ENCODE measurements at regions of chr19 and their contacts with region 1.

Region 1: GRCh38 chr19:3479177-3479833 is 1.0 kb downstream of the SMIM24 start:
- DNase-seq: peak; percentile 85
- ATAC-seq: peak; percentile 71
- H3K4me3 Mint-ChIP-seq: peak overlapping the region; percentile 48
- H3K27ac Mint-ChIP-seq: no peak overlapping the region
- H3K4me1 Mint-ChIP-seq: peaks cover 9% of the 10 kb centered on the region
- H3K27me3 Mint-ChIP-seq: no peaks in the 10 kb centered on the region

Region 2: GRCh38 chr19:3304871-3305423 is 174.4 kb before region 1 on chr19:
- CTCF ChIA-PET with region 1: interaction called, 17 read pairs
- DNase-seq: peak; percentile 80
- ATAC-seq: peak; percentile 66
- H3K4me3 Mint-ChIP-seq: no peak overlapping the region
- H3K27ac Mint-ChIP-seq: no peak overlapping the region
- H3K4me1 Mint-ChIP-seq: no peaks in the 10 kb centered on the region
- H3K27me3 Mint-ChIP-seq: peaks cover 8% of the 10 kb centered on the region

Region 3: DNA sequence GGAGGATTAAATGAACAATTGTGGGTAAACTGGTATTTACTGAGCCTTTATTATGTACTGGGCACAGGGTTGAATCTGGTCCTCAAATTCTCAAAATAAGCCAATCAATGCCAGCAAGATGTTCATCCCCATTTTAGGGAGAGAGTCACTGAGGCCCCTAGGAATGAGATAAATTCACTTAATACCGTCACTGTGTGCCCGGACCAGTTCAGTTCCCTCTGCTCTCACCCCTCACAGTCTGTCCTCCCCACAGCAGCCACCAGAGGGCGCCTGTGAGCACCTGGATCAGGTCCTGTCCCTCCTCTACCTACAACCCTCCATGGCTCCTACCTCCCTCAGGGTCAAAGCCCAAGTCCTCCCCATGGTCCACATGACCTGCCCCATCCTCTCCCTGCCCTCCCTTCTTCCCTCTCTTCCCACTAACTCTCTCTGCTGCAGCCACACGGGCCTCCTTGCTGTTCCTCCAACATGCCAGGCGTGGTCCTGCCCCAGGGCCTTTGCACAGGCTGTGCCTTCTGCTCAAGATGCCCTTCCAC is 154.9 kb before region 1 on chr19:
- CTCF ChIA-PET with region 1: interaction called, 10 read pairs
- DNase-seq: peak; percentile 84
- ATAC-seq: peak; percentile 79
- H3K4me3 Mint-ChIP-seq: no peak overlapping the region
- H3K27ac Mint-ChIP-seq: no peak overlapping the region
- H3K4me1 Mint-ChIP-seq: no peaks in the 10 kb centered on the region
- H3K27me3 Mint-ChIP-seq: no peaks in the 10 kb centered on the region

Region 4: DNA sequence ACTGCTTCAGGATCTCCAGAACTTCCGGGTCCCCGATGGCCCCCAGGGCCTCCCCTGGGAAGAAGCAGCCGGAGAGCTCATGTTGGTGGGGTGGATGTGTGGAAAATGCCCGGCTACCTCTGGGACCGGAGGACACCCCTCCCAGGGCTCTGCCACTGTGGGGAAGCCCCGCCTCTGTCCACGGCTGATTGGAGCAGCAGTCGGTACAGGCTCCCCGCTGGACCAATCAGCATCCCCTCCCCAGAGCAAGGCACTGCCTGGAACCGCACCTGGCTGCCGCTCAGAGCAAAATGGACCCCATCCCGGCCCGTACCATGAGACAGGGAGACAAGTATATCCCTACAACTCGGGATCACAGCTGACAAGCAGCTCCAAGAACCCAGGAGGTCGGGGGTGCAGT is 14.7 kb after region 1 on chr19:
- CTCF ChIA-PET with region 1: interaction called, 28 read pairs
- DNase-seq: no peak
- ATAC-seq: no peak
- H3K4me3 Mint-ChIP-seq: no peak overlapping the region
- H3K27ac Mint-ChIP-seq: no peak overlapping the region
- H3K4me1 Mint-ChIP-seq: peaks cover 8% of the 10 kb centered on the region
- H3K27me3 Mint-ChIP-seq: no peaks in the 10 kb centered on the region

Region 5: DNA sequence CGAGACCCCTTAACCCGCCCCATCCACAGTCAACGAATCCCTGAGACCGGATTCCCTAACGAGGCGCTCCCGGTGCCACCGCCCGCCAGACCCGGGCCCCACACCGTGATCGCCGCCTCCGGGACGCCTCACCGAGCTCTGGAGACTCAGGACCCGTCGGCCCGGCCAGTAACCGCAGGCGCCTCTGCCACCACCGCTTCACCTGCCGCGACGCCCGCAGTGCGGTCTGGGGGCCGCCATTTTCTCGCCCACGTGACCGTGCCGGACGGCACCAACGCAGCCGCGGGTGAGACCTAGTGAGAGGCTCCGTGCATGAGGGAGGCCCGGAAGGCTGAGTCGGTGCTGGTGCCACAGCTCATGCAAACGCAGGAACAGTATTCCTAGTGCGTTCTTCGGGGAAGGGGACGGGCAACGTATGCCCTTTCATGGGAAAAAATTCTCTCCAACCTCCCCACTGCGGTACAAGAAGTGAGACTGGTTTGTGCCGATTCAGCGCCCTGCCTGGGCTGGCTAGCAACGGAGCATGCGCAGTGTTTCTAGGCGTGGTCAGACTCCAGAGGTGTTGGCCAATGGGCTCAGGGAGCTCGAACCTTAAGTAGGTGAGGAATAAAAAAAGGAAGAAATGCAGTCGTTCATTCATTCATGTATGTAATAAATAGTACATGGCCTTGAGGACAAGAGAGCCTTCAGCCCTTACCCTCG is 21.3 kb after region 1 on chr19 and contains the start of gene DOHH:
- CTCF ChIA-PET with region 1: interaction called, 28 read pairs
- DNase-seq: peak; percentile 98
- ATAC-seq: peak; percentile 86
- H3K4me3 Mint-ChIP-seq: peak within 1 kb of the TSS; percentile 89
- H3K27ac Mint-ChIP-seq: peak within 1 kb of the TSS; percentile 96
- H3K4me1 Mint-ChIP-seq: peaks cover 30% of the 10 kb centered on the region
- H3K27me3 Mint-ChIP-seq: peaks cover 4% of the 10 kb centered on the region
- total RNA-seq, gene DOHH: 13.3 to 17.0 TPM

Region 6: GRCh38 chr19:3516675-3517207 is 37.4 kb after region 1 on chr19:
- CTCF ChIA-PET with region 1: no interaction called
- DNase-seq: no peak
- ATAC-seq: no peak
- H3K4me3 Mint-ChIP-seq: no peak overlapping the region
- H3K27ac Mint-ChIP-seq: no peak overlapping the region
- H3K4me1 Mint-ChIP-seq: peaks cover 14% of the 10 kb centered on the region
- H3K27me3 Mint-ChIP-seq: no peaks in the 10 kb centered on the region